GM10248 (cell line): ENCODE measurements at regions of chr3 and their contacts with region 1.

Region 1: GRCh38 chr3:425079-425478 is 228.5 kb downstream of the CHL1 start:
- DNase-seq: no peak
- CTCF ChIP-seq: no peak

Region 2: DNA sequence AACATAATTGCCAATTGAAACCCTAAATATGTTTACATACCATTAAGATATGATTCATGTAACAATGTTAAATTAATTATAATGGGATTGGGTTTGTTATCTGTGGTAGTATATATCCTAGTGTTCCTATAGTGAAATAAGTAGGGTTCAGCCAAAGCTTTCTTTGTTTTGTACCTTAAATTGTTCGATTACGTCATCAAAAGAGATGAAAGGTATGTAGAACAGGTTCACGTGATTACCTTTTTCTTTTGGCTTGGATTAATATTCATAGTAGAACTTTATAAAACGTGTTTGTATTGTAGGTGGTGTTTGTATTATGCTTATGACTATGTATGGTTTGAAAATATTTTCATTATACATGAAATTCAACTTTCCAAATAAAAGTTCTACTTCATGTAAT is 16.1 kb before region 1 on chr3:
- CTCF ChIA-PET with region 1: no interaction called
- POLR2A ChIA-PET with region 1: no interaction called
- DNase-seq: no peak
- CTCF ChIP-seq: no peak

Region 3: GRCh38 chr3:436053-436452 is 11.0 kb after region 1 on chr3:
- CTCF ChIA-PET with region 1: interaction called, 12 read pairs
- POLR2A ChIA-PET with region 1: no interaction called
- DNase-seq: no peak
- CTCF ChIP-seq: no peak